GM13976 (cell line): ENCODE measurements at regions of chr22 and their contacts with region 1.

Region 1: DNA sequence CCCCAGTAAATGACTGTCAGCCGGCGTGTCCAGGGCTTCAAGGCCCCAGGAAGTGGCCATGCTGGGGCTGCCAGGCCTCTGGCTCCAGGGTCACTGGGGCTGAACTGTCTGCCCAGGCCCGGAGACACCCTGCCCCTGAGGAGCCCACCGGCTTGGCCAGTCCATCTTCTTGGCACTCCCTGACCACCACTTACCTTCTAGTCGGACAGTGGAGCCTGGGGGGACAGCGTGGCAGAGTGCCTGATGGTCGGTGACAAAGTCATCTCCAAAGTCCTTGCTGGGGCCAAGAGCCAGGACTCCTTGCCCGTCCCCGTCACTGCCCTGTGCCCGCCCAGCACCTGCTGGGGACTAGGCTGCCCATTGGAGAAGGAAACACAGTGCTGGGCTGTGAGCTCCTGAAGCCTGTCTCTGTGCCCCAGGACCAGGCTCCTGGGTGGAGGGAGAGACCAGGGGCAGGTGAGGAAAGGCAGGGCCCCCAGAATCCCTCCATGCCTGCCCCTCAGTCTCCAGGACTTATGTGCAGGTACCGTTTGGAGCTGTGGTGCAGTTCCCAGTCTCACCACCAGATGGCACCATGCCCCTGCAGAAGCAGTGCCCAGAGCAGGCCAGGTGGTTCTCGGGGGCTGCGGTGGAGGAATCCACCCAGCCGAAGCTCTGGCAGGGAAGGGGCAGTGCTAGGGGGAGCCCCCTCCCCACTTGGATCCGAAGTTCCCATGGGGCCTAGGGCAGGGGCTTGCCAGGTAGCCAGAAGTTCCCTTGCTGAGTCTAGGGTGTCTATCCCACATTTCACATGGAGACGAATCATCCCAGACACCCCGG is 6.0 kb upstream of the CCDC188 start:
- DNase-seq: peak; percentile 96
- CTCF ChIP-seq: peak; percentile 97

Region 2: DNA sequence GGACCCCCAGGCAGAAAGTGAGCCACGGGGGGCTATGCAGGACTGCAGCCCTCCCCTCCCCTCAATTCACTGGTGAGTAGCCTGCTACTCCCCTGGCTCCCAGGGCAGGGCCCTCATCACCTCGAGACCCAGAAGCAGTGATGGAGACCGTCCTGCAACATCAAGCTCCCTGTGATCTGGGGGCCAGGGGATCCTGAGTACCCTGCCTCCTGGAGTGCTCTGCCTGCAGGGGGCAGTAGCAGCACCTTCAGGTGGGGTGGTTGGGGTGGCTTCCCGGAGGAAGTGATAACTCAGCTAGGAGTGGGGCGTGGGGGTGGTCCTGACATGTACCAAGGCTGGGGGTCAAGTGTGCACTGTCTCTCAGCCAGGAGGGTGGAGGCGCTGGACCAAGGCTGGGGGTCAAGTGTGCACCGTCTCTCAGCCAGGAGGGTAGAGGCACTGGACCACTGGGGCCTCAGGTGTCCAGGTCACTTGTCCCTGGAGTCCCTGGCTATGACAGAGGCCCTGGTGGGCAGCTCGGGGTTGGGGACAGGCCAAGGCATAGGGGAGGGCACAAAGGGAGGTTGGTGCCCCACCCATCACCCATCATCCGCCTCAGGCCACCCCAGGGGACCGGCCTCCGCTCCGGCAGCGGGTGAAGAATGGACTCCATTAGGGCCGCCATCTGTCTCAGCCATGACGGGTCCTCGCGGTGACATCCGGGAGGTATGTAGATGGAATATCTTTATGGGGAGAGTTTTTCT is 101.9 kb after region 1 on chr22:
- in situ Hi-C with region 1: loop called (anchors 10 kb)
- DNase-seq: peak; percentile 71
- CTCF ChIP-seq: peak; percentile 45

Region 3: GRCh38 chr22:20298803-20299735 is 142.2 kb after region 1 on chr22:
- in situ Hi-C with region 1: loop called (anchors 10 kb)
- DNase-seq: peak; percentile 87
- CTCF ChIP-seq: no peak